ENCODE measurements at regions of chr1 and their contacts with region 1.

Region 1: DNA sequence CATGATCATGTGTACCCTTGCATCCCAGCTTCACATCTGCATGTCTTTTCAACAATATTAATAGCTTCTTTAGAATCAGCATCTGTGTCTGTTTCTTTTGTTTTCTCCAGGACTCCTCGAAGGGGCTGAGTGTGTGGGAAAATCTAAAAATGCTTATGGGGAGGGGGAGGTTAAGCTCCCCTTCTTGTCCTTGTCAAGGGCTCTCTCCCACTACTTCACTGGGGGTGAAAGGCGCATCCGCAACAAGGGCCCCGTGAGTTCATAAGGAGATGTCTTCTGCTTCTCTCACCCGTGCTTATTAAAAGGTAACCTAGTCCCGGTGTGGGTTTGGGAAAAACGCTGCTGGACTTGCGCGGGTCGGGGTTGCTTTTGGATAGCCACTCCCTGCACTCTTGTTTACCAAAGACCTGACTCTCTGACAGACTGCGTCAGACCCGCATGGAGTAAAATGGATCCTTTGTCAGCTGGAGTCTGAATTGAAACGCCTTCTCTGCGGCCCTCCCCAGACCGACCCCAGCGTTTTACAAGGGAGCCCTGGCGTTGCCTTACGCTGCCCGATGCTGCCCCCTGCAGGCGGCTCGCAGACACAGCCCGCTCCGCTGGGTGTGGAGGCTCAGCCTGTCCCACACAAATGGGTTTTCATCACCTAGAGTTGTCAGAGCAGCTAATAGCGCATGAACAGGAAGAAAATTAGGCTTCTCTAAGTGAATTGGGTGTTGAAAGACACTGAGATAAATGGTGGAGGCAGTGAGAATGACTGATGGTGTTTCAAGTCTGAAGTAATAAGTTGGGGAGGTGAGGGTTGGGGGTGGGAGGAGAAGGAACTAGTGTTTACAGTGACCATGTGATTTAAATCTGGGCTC is 53.8 kb downstream of the IER5 start:
- DNase-seq: peak; percentile 85
- H3K4me3 ChIP-seq: peak overlapping the region in 1 of 3 experiments; percentile 4
- H3K27ac ChIP-seq: peak overlapping the region; percentile 20
- H3K4me1 ChIP-seq: peaks cover 23% of the 10 kb centered on the region
- H3K27me3 ChIP-seq: peaks cover 0 to 9% of the 10 kb centered on the region in 2 experiments
- CTCF ChIP-seq: peak; percentile 94 to 96
- POLR2A ChIP-seq: no peak

Region 2: DNA sequence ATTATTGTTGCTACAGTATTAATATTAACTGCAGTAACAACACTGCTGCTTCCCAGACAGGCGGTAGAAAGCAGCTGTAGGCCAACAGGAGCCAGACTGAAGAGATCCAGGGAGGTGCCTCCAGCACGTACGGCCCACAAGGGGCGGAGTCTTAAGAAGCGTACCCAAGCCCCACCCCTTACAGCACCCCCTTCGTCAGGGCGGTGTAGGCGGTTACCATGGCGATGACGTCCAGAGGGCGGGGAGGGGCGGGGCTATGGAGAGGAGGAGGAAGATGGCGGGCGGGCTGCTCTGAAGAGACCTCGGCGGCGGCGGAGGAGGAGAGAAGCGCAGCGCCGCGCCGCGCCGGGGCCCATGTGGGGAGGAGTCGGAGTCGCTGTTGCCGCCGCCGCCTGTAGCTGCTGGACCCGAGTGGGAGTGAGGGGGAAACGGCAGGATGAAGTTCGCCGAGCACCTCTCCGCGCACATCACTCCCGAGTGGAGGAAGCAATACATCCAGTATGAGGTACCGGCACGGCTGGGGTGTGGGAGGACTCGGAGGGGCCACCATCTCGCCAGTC is 510.5 kb before region 1 on chr1 and contains the start of gene XPR1:
- CTCF ChIA-PET with region 1: no interaction called
- POLR2A ChIA-PET with region 1: no interaction called
- dilution Hi-C with region 1: no loop called
- intact Hi-C with region 1: loop called (anchors 5 kb)
- DNase-seq: peak; percentile 99
- H3K4me3 ChIP-seq: peak within 1 kb of the TSS; percentile 71 to 90 (median 87)
- H3K27ac ChIP-seq: peak within 1 kb of the TSS; percentile 34
- H3K4me1 ChIP-seq: peaks cover 13% of the 10 kb centered on the region
- H3K27me3 ChIP-seq: peaks cover 3 to 5% of the 10 kb centered on the region in 2 experiments
- CTCF ChIP-seq: peak in 1 of 2 donors; percentile 26
- POLR2A ChIP-seq: peak; percentile 52
- total RNA-seq, gene XPR1: 26.7 and 29.3 TPM in 2 replicates

Region 3: DNA sequence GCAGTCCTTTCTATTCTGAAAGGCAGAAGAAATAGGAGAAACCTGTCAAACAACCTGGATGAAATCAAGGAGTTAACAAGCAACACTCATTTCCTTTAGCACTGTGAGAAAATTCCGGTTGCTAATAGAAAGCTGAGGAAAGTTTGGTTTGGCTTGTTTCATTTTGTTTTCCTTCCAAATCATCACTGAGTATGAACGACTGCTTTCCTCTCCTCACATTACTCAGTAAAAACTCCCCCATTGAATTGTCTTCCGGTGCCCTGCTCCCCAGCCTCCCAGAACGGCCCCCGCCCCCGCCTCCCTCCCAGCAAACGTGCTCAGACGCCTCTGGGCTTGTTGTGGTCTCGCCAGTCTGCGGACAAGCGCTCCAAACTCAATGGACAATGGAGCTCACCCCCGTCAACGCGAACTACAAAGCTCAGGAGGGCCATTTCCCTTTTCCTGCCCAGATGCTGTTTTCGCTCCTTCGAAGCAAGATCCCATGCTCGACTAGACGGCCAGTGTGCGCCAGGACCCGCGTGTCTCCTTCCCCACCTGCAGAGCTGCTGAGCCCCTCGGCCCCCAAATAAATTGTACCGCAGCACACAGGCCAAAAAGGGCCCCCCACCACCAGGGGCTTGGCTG is 120.4 kb before region 1 on chr1:
- CTCF ChIA-PET with region 1: interaction called, 22 read pairs
- POLR2A ChIA-PET with region 1: no interaction called
- dilution Hi-C with region 1: no loop called
- intact Hi-C with region 1: loop called (anchors 1 kb)
- DNase-seq: peak; percentile 96
- H3K4me3 ChIP-seq: peak overlapping the region; percentile 62 to 84 (median 79)
- H3K27ac ChIP-seq: peak overlapping the region; percentile 80
- H3K4me1 ChIP-seq: peaks cover 13% of the 10 kb centered on the region
- H3K27me3 ChIP-seq: peaks cover 5 to 11% of the 10 kb centered on the region in 2 experiments
- CTCF ChIP-seq: no peak
- POLR2A ChIP-seq: peak; percentile 55

Region 4: GRCh38 chr1:181088079-181089016 is 54.0 kb before region 1 on chr1 and contains the start of gene IER5:
- CTCF ChIA-PET with region 1: interaction called, 319 read pairs
- POLR2A ChIA-PET with region 1: interaction called, 53 read pairs
- dilution Hi-C with region 1: no loop called
- intact Hi-C with region 1: loop called (anchors 1 kb)
- DNase-seq: peak; percentile 97
- H3K4me3 ChIP-seq: peak within 1 kb of the TSS; percentile 47 to 97 (median 54)
- H3K27ac ChIP-seq: peak within 1 kb of the TSS; percentile 47
- H3K4me1 ChIP-seq: peaks cover 17% of the 10 kb centered on the region
- H3K27me3 ChIP-seq: no peaks in the 10 kb centered on the region
- CTCF ChIP-seq: no peak
- POLR2A ChIP-seq: peak; percentile 100
- total RNA-seq, gene IER5: 14.4 and 14.9 TPM in 2 replicates

Region 5: DNA sequence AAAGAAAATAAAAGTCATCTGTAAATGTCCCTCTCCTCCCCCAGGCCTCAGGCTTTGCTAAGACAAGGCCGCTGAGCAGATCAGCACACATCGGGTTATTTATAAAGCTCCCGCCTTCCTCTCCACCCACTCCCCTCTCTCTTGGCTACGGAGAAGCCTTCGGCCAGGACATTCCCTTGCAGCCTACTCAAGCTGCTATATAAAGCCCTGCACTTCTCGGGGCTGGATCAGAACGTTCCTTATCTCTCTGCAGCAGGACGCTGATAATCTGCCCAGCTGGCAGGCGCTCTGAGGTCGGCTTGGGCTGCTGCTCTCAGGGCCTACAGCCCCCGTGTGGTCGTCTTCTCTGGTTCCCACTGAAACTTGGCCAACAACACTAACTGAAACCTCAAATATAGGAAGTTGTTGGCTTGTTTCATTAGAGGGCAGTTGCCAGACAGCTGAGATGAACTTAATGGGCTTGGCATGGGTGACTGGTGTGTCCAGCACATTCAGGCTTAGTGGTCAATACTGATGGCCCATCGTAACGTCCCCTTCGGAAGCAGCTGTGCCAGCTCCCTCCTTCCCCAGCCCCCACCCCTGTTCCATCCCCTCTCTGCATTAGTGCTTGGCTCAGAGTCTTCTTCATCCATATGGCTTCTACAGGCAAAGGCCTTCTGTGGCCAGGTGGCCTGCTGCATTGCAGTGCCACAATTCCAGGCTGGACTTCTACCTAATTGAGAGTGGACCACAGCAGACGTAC is 10.7 kb after region 1 on chr1:
- CTCF ChIA-PET with region 1: interaction called, 40 read pairs
- POLR2A ChIA-PET with region 1: interaction called, 4 read pairs
- dilution Hi-C with region 1: no loop called
- intact Hi-C with region 1: no loop called
- DNase-seq: peak; percentile 98
- H3K4me3 ChIP-seq: no peak overlapping the region
- H3K27ac ChIP-seq: no peak overlapping the region
- H3K4me1 ChIP-seq: peaks cover 7% of the 10 kb centered on the region
- H3K27me3 ChIP-seq: no peaks in the 10 kb centered on the region
- CTCF ChIP-seq: peak; percentile 31 to 72
- POLR2A ChIP-seq: no peak

Region 6: GRCh38 chr1:181219938-181220337 is 77.6 kb after region 1 on chr1:
- CTCF ChIA-PET with region 1: no interaction called
- POLR2A ChIA-PET with region 1: no interaction called
- dilution Hi-C with region 1: no loop called
- intact Hi-C with region 1: no loop called
- DNase-seq: no peak
- H3K4me3 ChIP-seq: no peak overlapping the region
- H3K27ac ChIP-seq: no peak overlapping the region
- H3K4me1 ChIP-seq: no peaks in the 10 kb centered on the region
- H3K27me3 ChIP-seq: no peaks in the 10 kb centered on the region
- CTCF ChIP-seq: no peak
- POLR2A ChIP-seq: no peak

Region 7: DNA sequence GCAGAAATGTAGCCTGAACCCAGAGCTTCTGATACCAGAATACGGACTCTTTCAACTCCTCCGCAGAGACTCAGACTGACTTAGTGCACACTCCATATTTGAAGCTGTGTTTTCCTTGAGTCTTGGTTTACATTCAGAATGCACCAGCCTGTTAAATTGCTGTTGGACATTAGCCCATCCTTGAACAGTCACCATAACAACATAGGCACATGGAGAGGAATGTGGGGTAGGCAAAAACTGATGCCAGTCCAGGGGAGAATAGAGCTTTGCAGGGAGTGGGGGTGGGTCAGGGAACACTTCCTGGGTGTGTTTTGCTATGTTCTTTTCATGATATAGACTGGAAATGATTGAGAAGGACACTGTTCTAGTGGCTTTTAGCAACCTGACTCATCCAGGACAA is 264.7 kb after region 1 on chr1:
- CTCF ChIA-PET with region 1: no interaction called
- POLR2A ChIA-PET with region 1: no interaction called
- dilution Hi-C with region 1: no loop called
- intact Hi-C with region 1: no loop called
- DNase-seq: no peak
- H3K4me3 ChIP-seq: no peak overlapping the region
- H3K27ac ChIP-seq: no peak overlapping the region
- H3K4me1 ChIP-seq: no peaks in the 10 kb centered on the region
- H3K27me3 ChIP-seq: no peaks in the 10 kb centered on the region
- CTCF ChIP-seq: no peak
- POLR2A ChIP-seq: no peak

Region 8: GRCh38 chr1:181517181-181517875 is 375.0 kb after region 1 on chr1:
- CTCF ChIA-PET with region 1: no interaction called
- POLR2A ChIA-PET with region 1: no interaction called
- dilution Hi-C with region 1: no loop called
- intact Hi-C with region 1: no loop called
- DNase-seq: no peak
- H3K4me3 ChIP-seq: no peak overlapping the region
- H3K27ac ChIP-seq: no peak overlapping the region
- H3K4me1 ChIP-seq: no peaks in the 10 kb centered on the region
- H3K27me3 ChIP-seq: no peaks in the 10 kb centered on the region
- CTCF ChIP-seq: no peak
- POLR2A ChIP-seq: no peak

Measured in endothelial cell of umbilical vein (primary cell).